ENCODE measurements at regions of chr4 and their contacts with region 1.

Region 1: GRCh38 chr4:69881173-69881773 is 21.3 kb upstream of the SULT1E1 start:
- DNase-seq: no peak
- ATAC-seq: peak; percentile 94
- H3K4me3 ChIP-seq: no peak overlapping the region
- H3K27ac ChIP-seq: no peak overlapping the region
- H3K4me1 ChIP-seq: no peaks in the 10 kb centered on the region
- H3K27me3 ChIP-seq: no peaks in the 10 kb centered on the region
- CTCF ChIP-seq: peak; percentile 87

Region 2: DNA sequence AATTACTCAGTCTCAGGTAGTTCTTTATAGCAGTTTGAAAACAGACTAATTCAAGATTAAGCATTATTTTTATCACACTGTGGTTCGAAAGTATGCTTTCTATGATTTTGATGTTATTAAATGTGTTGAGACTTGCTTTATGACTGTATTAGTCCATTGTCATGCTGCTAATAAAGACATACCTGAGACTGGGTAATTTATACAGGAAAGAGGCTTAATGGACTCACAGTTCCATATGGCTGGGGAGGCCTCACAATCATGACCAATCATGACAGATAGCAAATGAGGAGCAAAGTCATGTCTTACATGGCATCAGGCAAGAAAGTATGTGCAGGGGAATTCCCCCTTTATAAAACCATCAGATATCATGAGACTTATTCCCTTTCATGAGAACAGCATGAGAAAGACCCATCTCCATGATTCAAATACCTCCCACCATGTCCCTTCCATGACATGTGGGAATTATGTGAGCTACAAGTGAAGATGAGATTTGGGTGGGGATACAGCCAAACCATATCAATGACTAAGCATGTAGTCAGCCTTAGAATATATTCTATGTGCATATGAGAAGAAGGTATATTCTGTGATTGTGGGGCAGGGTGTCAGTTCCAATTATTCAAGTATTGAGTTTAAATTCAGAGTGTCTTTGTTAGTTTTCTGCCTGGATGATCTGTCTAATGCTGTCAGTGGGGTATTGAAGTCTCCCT is 183.6 kb before region 1 on chr4:
- intact Hi-C with region 1: loop called (anchors 10 kb)
- DNase-seq: no peak
- ATAC-seq: no peak
- H3K4me3 ChIP-seq: no peak overlapping the region
- H3K27ac ChIP-seq: no peak overlapping the region
- H3K4me1 ChIP-seq: no peaks in the 10 kb centered on the region
- H3K27me3 ChIP-seq: no peaks in the 10 kb centered on the region
- CTCF ChIP-seq: no peak